Common myeloid progenitor, CD34-positive (primary cell): ENCODE measurements at regions of chr13 and their contacts with region 1.

Region 1: DNA sequence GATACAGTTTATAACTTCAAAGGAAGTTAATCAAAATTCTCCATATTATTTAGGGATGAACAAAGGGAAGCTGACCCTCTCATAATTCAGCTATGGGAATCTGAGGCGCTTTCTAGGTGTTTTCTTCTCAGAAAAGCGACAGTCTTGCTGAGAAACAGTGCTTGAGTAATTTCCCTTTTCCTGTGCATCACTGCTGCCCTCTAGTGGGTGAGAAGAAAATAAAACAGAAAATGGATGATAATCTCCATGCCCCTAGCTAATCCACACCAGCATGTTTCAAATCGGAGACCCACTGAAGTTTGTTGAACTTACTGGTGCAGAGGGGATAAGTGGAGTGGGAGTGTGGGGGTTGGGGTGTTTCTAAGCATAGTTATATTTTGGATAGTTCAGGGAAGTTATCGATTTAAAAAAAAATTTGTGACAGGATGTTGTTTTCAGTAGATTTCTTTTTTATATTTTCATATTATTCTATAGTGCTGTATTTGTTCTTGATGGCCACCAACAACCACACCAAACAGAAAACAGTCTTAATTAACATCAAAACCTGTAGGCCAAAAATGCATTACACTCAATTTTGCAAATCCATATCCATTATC is 21.4 kb downstream of the LCP1 start:
- DNase-seq: peak; percentile 84 to 88 (median 84)
- H3K4me3 ChIP-seq: peak overlapping the region in 1 of 7 experiments; percentile 40
- H3K27ac ChIP-seq: peak overlapping the region in 1 of 2 experiments; percentile 28
- H3K4me1 ChIP-seq: peaks cover 21 to 29% (median 25%) of the 10 kb centered on the region in 4 experiments
- H3K27me3 ChIP-seq: no peaks in the 10 kb centered on the region

Region 2: DNA sequence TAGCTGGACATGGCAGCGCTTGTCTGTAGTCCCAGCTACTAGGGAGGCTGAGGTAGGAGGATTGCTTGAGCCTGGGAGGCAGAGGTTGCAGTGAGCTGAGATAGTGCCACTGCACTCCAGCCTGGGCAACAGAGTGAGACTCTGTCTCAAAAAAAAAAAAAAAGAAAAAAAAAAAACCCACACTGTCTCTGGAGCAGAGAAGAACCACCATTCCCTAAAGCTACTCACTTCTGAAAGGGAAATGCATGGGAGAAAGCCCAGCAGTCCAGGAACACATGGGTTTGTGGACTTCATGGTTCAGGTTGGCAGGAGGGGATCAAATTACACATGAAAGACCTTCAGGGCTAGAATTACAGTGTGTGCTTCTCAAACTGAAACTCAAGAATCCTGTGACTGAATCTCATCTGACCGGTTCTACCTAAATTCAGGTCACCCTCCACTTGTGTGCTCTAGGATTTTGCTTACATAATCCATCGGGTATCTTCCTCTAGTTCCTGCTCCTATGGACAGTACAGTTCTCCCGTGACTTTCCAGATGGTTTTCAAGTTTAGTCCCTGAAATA is 25.5 kb before region 1 on chr13:
- CTCF ChIA-PET with region 1: interaction called, 24 read pairs
- POLR2A ChIA-PET with region 1: no interaction called
- DNase-seq: no peak
- H3K4me3 ChIP-seq: no peak overlapping the region
- H3K27ac ChIP-seq: peak overlapping the region in 1 of 2 experiments; percentile 8
- H3K4me1 ChIP-seq: no peaks in the 10 kb centered on the region
- H3K27me3 ChIP-seq: no peaks in the 10 kb centered on the region

Region 3: GRCh38 chr13:46149272-46150133 is 11.1 kb before region 1 on chr13:
- CTCF ChIA-PET with region 1: interaction called, 13 read pairs
- POLR2A ChIA-PET with region 1: no interaction called
- DNase-seq: no peak
- H3K4me3 ChIP-seq: no peak overlapping the region
- H3K27ac ChIP-seq: no peak overlapping the region
- H3K4me1 ChIP-seq: no peaks in the 10 kb centered on the region
- H3K27me3 ChIP-seq: no peaks in the 10 kb centered on the region

Region 4: DNA sequence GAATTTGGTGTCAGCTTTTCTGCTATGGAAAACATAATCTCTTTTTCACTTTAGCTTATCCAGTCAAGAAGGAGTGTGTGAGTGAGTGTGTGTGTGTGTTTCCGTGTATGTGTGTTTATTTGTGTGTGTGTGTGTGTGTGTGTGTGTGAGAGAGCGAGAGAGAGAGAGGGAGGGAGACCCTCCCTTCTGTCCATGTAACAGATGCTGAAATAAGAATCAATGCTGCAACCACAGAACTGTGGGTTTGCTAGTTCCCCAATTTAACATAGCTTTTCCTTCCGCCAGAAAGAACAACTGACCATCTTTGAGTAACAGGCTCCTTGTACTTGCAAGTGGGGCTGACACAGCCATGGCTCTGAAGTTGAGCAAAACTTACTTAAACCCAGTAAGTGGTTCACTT is 16.2 kb after region 1 on chr13:
- CTCF ChIA-PET with region 1: interaction called, 55 read pairs
- POLR2A ChIA-PET with region 1: interaction called, 4 read pairs
- DNase-seq: peak; percentile 90 to 98 (median 98)
- H3K4me3 ChIP-seq: peak overlapping the region in 5 of 7 experiments; percentile 5 to 82 (median 60)
- H3K27ac ChIP-seq: peak overlapping the region in 1 of 2 experiments; percentile 60
- H3K4me1 ChIP-seq: peaks cover 69 to 87% (median 74%) of the 10 kb centered on the region in 4 experiments
- H3K27me3 ChIP-seq: no peaks in the 10 kb centered on the region

Region 5: GRCh38 chr13:46288570-46289259 is 128.1 kb after region 1 on chr13:
- CTCF ChIA-PET with region 1: interaction called, 45 read pairs
- POLR2A ChIA-PET with region 1: interaction called, 3 read pairs
- DNase-seq: peak; percentile 58 to 82 (median 75)
- H3K4me3 ChIP-seq: no peak overlapping the region
- H3K27ac ChIP-seq: no peak overlapping the region
- H3K4me1 ChIP-seq: peaks cover 0 to 5% (median 0%) of the 10 kb centered on the region in 4 experiments
- H3K27me3 ChIP-seq: no peaks in the 10 kb centered on the region